ENCODE measurements at regions of chr4 and their contacts with region 1.

Region 1: GRCh38 chr4:26028793-26029567 is 115.0 kb downstream of the SMIM20 start:
- DNase-seq: no peak
- ATAC-seq: peak; percentile 99
- H3K4me3 ChIP-seq: no peak overlapping the region
- H3K27ac ChIP-seq: no peak overlapping the region
- H3K4me1 ChIP-seq: peaks cover 4% of the 10 kb centered on the region
- H3K27me3 ChIP-seq: no peaks in the 10 kb centered on the region
- CTCF ChIP-seq: peak; percentile 75 to 89 (median 85)
- EP300 ChIP-seq: no peak
- POLR2A ChIP-seq: no peak
- RAD21 ChIP-seq: peak; percentile 93

Region 2: DNA sequence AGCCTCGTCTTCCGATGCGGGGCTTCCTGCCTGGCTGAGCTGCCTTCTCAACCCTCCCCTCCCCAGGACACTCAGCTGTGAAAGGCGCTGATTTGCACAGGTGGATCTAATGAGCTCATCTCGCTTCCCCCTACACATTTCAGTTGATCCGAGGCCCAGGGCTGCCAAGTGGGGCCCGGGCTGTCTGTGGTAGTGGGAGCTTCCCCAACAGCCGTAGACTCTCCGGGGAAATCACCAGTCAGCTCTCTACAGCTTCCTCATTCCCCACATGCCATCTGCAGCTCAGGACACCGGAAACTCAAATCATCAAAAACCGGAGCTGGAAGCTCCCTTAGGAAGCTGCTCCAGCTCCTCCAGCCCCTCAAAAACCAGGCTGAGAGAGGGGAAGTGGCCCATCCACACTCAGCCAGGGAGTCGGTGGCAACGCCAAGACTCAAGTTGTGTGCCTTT is 58.7 kb before region 1 on chr4:
- CTCF ChIA-PET with region 1: no interaction called
- POLR2A ChIA-PET with region 1: no interaction called
- RAD21 ChIA-PET with region 1: no interaction called
- SMC1A ChIA-PET with region 1: no interaction called
- in situ Hi-C with region 1: loop called (anchors 10 kb)
- intact Hi-C with region 1: no loop called
- DNase-seq: no peak
- ATAC-seq: peak; percentile 81
- H3K4me3 ChIP-seq: no peak overlapping the region
- H3K27ac ChIP-seq: no peak overlapping the region
- H3K4me1 ChIP-seq: peaks cover 14% of the 10 kb centered on the region
- H3K27me3 ChIP-seq: no peaks in the 10 kb centered on the region
- CTCF ChIP-seq: no peak
- EP300 ChIP-seq: no peak
- POLR2A ChIP-seq: no peak
- RAD21 ChIP-seq: no peak

Region 3: GRCh38 chr4:26061248-26061986 is 32.4 kb after region 1 on chr4:
- CTCF ChIA-PET with region 1: interaction called, 9 read pairs
- POLR2A ChIA-PET with region 1: no interaction called
- RAD21 ChIA-PET with region 1: interaction called, 11 read pairs
- SMC1A ChIA-PET with region 1: interaction called, 3 read pairs
- in situ Hi-C with region 1: no loop called
- intact Hi-C with region 1: no loop called
- DNase-seq: no peak
- ATAC-seq: peak; percentile 96
- H3K4me3 ChIP-seq: no peak overlapping the region
- H3K27ac ChIP-seq: no peak overlapping the region
- H3K4me1 ChIP-seq: peaks cover 9% of the 10 kb centered on the region; the same call in 1 of the 2 replicates
- H3K27me3 ChIP-seq: no peaks in the 10 kb centered on the region; a peak in 3 of 4 replicates
- CTCF ChIP-seq: peak; percentile 64 to 76 (median 76); a peak in 5 of 6 replicates
- EP300 ChIP-seq: no peak
- POLR2A ChIP-seq: no peak
- RAD21 ChIP-seq: peak; percentile 94

Region 4: GRCh38 chr4:26223161-26223560 is 194.2 kb after region 1 on chr4:
- CTCF ChIA-PET with region 1: no interaction called
- POLR2A ChIA-PET with region 1: no interaction called
- RAD21 ChIA-PET with region 1: no interaction called
- SMC1A ChIA-PET with region 1: no interaction called
- in situ Hi-C with region 1: no loop called
- intact Hi-C with region 1: no loop called
- DNase-seq: no peak
- ATAC-seq: no peak
- H3K4me3 ChIP-seq: no peak overlapping the region
- H3K27ac ChIP-seq: no peak overlapping the region
- H3K4me1 ChIP-seq: peaks cover 10% of the 10 kb centered on the region
- H3K27me3 ChIP-seq: peaks cover 0 to 2% of the 10 kb centered on the region in 2 experiments; a peak in 1 of 4 replicates
- CTCF ChIP-seq: no peak
- EP300 ChIP-seq: no peak
- POLR2A ChIP-seq: no peak
- RAD21 ChIP-seq: no peak

Region 5: GRCh38 chr4:26238778-26239679 is 210.0 kb after region 1 on chr4:
- CTCF ChIA-PET with region 1: no interaction called
- POLR2A ChIA-PET with region 1: no interaction called
- RAD21 ChIA-PET with region 1: no interaction called
- SMC1A ChIA-PET with region 1: no interaction called
- in situ Hi-C with region 1: no loop called
- intact Hi-C with region 1: no loop called
- DNase-seq: no peak
- ATAC-seq: no peak
- H3K4me3 ChIP-seq: no peak overlapping the region
- H3K27ac ChIP-seq: no peak overlapping the region
- H3K4me1 ChIP-seq: no peaks in the 10 kb centered on the region
- H3K27me3 ChIP-seq: no peaks in the 10 kb centered on the region
- CTCF ChIP-seq: no peak
- EP300 ChIP-seq: no peak
- POLR2A ChIP-seq: no peak
- RAD21 ChIP-seq: no peak

Region 6: DNA sequence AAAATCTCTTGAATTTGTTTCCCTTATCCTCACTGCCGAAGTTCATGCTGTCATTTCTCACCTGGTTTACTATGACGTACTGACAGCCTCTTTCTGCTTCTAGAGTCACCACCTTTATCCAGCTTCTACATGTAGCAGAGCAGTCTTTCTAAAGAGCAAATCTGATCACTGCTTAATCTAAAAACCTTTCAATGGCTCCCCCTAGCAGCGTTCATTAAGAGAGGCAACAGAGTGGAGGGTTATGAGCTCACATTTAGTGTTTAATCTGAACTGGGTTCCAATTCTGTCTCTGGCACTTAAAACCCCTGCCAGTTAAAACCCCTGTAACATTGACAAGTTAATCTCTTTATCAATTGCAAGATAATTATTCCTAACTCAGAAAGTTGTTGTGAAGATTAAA is 296.2 kb after region 1 on chr4:
- CTCF ChIA-PET with region 1: interaction called, 18 read pairs
- POLR2A ChIA-PET with region 1: no interaction called
- RAD21 ChIA-PET with region 1: interaction called, 15 read pairs
- SMC1A ChIA-PET with region 1: interaction called, 17 read pairs
- in situ Hi-C with region 1: no loop called
- intact Hi-C with region 1: no loop called
- DNase-seq: no peak
- ATAC-seq: peak; percentile 63
- H3K4me3 ChIP-seq: peak overlapping the region; percentile 10; the same call in 1 of the 2 replicates
- H3K27ac ChIP-seq: no peak overlapping the region
- H3K4me1 ChIP-seq: no peaks in the 10 kb centered on the region
- H3K27me3 ChIP-seq: no peaks in the 10 kb centered on the region
- CTCF ChIP-seq: peak; percentile 46 to 64 (median 56); a peak in 5 of 6 replicates
- EP300 ChIP-seq: no peak
- POLR2A ChIP-seq: no peak
- RAD21 ChIP-seq: peak; percentile 78

Region 7: DNA sequence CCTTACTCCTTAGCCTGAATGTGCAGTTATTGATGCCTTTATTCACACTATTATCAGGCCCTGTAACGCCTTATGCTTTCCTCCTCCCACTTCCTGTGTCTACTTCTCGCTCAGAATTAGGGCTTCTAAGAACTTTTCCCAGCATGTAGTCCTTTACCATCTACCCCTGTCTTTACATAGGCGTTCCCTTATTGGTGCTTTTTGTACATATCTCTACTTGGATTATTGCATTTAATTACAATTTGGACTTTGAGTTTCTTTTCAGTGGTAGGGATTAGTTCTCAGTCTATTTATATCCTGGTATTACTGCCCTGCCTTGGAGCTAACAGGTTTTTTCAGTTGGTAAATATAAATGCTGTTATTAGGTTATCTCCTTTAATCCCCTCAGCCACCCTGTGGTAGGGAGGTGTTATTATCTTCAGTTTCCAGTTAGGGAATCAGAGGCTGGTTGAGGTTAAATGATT is 375.8 kb after region 1 on chr4:
- CTCF ChIA-PET with region 1: interaction called, 8 read pairs
- POLR2A ChIA-PET with region 1: no interaction called
- RAD21 ChIA-PET with region 1: interaction called, 20 read pairs
- SMC1A ChIA-PET with region 1: interaction called, 11 read pairs
- in situ Hi-C with region 1: no loop called
- intact Hi-C with region 1: no loop called
- DNase-seq: no peak
- ATAC-seq: no peak
- H3K4me3 ChIP-seq: no peak overlapping the region
- H3K27ac ChIP-seq: no peak overlapping the region
- H3K4me1 ChIP-seq: peaks cover 10% of the 10 kb centered on the region
- H3K27me3 ChIP-seq: no peaks in the 10 kb centered on the region
- CTCF ChIP-seq: no peak
- EP300 ChIP-seq: no peak
- POLR2A ChIP-seq: no peak
- RAD21 ChIP-seq: no peak

Region 8: DNA sequence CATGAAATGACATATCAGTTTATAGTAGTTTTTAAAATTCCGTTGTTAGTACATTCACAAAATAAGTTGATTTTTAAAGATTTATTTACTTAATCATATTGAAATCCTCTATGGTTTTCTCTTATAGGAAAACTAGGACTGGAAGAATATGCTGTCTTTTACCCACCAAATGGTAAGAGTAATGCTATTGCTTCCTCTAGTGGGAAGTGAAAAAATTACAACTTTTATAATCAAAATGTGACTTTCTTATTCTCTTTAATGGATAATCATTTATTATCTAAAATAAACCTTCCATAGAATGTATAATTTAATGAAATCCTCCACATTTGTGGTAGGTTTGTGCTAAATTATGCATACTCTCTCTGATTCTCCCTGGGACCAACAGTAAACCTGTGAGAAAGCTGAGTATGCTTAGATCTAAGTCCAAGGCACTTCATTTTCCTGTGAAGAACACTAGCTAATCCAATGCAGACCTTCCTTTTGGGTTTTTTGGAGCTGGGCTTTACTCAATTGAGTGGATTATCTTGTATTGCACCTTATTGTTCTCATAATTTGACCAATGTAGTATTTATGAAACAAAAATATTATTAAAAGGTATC is 691.1 kb after region 1 on chr4:
- CTCF ChIA-PET with region 1: interaction called, 14 read pairs
- POLR2A ChIA-PET with region 1: no interaction called
- RAD21 ChIA-PET with region 1: no interaction called
- SMC1A ChIA-PET with region 1: interaction called, 4 read pairs
- in situ Hi-C with region 1: no loop called
- intact Hi-C with region 1: no loop called
- DNase-seq: no peak
- ATAC-seq: no peak
- H3K4me3 ChIP-seq: no peak overlapping the region
- H3K27ac ChIP-seq: no peak overlapping the region
- H3K4me1 ChIP-seq: no peaks in the 10 kb centered on the region
- H3K27me3 ChIP-seq: no peaks in the 10 kb centered on the region
- CTCF ChIP-seq: peak in 2 of 3 experiments; percentile 34 to 40; a peak in 3 of 6 replicates
- EP300 ChIP-seq: no peak
- POLR2A ChIP-seq: no peak
- RAD21 ChIP-seq: peak; percentile 78